Calu3 (cell line): ENCODE measurements at regions of chr6 and their contacts with region 1.

Region 1: GRCh38 chr6:56314683-56315523 is 67.5 kb upstream of the COL21A1 start:
- DNase-seq: peak; percentile 59
- H3K4me3 Mint-ChIP-seq: no peak overlapping the region
- H3K27ac Mint-ChIP-seq: no peak overlapping the region
- H3K4me1 Mint-ChIP-seq: no peaks in the 10 kb centered on the region
- H3K27me3 Mint-ChIP-seq: peaks cover 16% of the 10 kb centered on the region
- CTCF ChIP-seq: peak; percentile 60

Region 2: GRCh38 chr6:56593801-56594318 is 279.0 kb after region 1 on chr6:
- CTCF ChIA-PET with region 1: interaction called, 6 read pairs
- intact Hi-C with region 1: loop called (anchors 2 kb)
- DNase-seq: no peak
- H3K4me3 Mint-ChIP-seq: no peak overlapping the region
- H3K27ac Mint-ChIP-seq: no peak overlapping the region
- H3K4me1 Mint-ChIP-seq: no peaks in the 10 kb centered on the region
- H3K27me3 Mint-ChIP-seq: no peaks in the 10 kb centered on the region
- CTCF ChIP-seq: no peak